A549 (cell line): ENCODE measurements at regions of chr17 and their contacts with region 1.

Region 1: DNA sequence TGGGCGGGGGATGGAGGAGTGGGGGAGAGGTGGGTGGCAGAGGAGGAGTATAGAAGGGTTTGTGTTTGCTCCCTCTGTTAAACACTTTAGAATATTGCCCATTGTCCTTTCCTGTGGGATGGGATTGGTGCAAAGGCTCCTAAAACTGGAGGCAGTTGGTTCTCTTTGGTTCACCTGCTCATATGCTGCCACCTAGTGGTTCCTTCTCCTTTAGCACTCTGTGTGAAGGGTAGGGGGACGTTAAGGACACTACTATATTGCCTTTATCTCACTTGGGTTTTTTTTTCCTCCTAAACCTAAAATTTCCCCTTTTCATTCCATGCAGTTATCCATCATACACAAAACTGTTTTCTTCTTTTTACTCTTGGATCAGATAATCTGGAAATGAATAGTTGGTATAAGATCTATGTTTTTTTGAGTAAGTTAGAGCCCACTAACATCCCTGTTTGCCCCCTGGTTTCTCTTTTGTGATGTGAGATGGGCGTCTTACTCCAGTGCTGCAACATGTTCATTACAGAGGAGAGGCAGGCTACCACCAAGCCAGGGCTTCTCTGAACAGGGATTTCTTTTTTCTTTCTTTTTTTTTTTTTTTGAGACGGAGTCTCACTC is 23.8 kb downstream of the SNX11 start:
- DNase-seq: peak; percentile 79 to 87
- ATAC-seq: peak; percentile 88 to 93
- H3K4me3 ChIP-seq: no peak overlapping the region
- H3K27ac ChIP-seq: no peak overlapping the region
- H3K4me1 ChIP-seq: peaks cover 12% of the 10 kb centered on the region
- CTCF ChIP-seq: peak; percentile 98
- EP300 ChIP-seq: no peak
- POLR2A ChIP-seq: no peak
- RAD21 ChIP-seq: peak; percentile 91 to 97

Region 2: DNA sequence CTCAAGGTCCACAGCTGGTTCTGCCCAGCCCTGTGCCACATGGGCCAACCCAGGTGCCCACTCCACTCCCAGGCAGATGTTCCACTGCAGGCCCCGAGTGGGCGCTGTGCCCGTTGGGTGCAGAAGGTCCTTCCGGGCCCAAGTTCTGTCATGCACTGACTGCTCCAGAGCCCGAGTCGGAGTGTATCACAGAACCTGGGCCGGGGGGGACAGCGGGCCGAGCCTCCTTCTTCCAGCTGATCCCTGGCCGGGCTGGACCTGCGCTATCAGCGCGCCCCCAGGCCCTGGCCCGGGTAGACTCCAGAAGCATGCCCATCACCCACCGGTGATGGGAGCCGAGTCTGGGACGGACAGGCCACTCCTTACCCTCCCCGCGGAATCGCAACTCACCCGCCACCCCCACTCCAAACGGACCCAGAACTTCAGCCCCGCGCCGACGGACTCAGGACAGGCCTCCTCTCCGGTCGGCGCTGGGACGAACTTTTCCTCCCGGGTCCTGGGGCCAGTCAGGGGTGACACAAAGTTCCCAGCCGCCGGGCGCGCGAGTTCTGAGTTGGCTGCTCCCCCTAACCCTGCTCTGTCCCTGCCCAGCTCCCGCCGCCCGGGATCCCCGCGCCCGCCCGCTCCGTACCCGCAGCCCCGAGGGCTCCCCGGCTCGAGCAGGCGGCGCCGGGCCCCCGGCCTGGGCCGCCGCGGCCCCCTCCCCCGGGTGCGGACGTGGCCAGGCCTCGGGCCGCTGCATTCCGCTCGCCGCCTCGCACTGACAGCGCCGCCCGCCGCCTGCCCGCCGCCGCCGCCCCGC is 94.1 kb before region 1 on chr17 and contains the start of gene COPZ2:
- CTCF ChIA-PET with region 1: interaction called, 11 read pairs
- POLR2A ChIA-PET with region 1: no interaction called
- DNase-seq: peak; percentile 71 to 85
- ATAC-seq: peak; percentile 94 to 95
- H3K4me3 ChIP-seq: peak within 1 kb of the TSS; percentile 63
- H3K27ac ChIP-seq: peak within 1 kb of the TSS; percentile 74 to 91
- H3K4me1 ChIP-seq: 0 out of 3 replicates have a peak, but pooled peaks cover 3% of the 10 kb centered on the region
- CTCF ChIP-seq: peak; percentile 70
- EP300 ChIP-seq: no peak
- POLR2A ChIP-seq: peak; percentile 28
- RAD21 ChIP-seq: 0 out of 5 replicates have a peak, but pooled peaks have one; percentile 17 to 36
- polyA plus RNA-seq, gene COPZ2: 19.1 and 19.3 TPM in 2 replicates

Region 3: GRCh38 chr17:48074315-48075081 is 56.8 kb before region 1 on chr17:
- CTCF ChIA-PET with region 1: interaction called, 157 read pairs
- POLR2A ChIA-PET with region 1: no interaction called
- DNase-seq: peak; percentile 72 to 80
- ATAC-seq: peak; percentile 91 to 92
- H3K4me3 ChIP-seq: no peak overlapping the region
- H3K27ac ChIP-seq: no peak overlapping the region
- H3K4me1 ChIP-seq: no peaks in the 10 kb centered on the region
- CTCF ChIP-seq: peak; percentile 96
- EP300 ChIP-seq: no peak
- POLR2A ChIP-seq: no peak
- RAD21 ChIP-seq: peak; percentile 83 to 88

Region 4: DNA sequence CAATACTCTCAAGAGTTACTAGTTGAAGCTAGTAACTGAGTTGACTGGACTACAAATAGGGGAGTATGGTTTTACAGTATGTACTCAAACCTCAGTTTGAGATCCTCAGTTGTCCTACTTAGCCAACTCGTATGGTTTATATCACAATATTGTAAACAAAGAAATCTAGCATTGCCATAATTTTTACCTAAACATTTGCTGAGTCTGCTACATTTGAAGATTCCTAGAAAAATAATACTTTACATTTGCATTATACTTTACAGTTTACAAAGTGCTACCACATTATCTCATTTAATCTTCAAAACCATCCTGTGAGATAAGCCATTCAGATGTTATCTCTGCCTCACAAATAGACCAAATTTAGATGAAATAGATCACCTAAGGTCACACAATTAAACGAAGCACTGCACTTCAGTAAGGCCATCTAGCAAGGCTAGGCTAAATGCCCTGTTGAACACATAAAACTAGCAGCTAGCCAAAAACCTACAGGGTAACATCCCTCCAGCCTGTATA is 46.3 kb before region 1 on chr17:
- CTCF ChIA-PET with region 1: interaction called, 157 read pairs
- POLR2A ChIA-PET with region 1: no interaction called
- DNase-seq: no peak
- ATAC-seq: no peak
- H3K4me3 ChIP-seq: no peak overlapping the region
- H3K27ac ChIP-seq: no peak overlapping the region
- H3K4me1 ChIP-seq: peaks cover 17% of the 10 kb centered on the region
- CTCF ChIP-seq: no peak
- EP300 ChIP-seq: no peak
- POLR2A ChIP-seq: no peak
- RAD21 ChIP-seq: no peak

Region 5: GRCh38 chr17:48095611-48096010 is 35.7 kb before region 1 on chr17:
- CTCF ChIA-PET with region 1: interaction called, 12 read pairs
- POLR2A ChIA-PET with region 1: no interaction called
- DNase-seq: no peak
- ATAC-seq: no peak
- H3K4me3 ChIP-seq: no peak overlapping the region
- H3K27ac ChIP-seq: no peak overlapping the region
- H3K4me1 ChIP-seq: peaks cover 23% of the 10 kb centered on the region
- CTCF ChIP-seq: no peak
- EP300 ChIP-seq: no peak
- POLR2A ChIP-seq: no peak
- RAD21 ChIP-seq: no peak

Region 6: GRCh38 chr17:48113201-48113676 is 18.1 kb before region 1 on chr17:
- CTCF ChIA-PET with region 1: interaction called, 18 read pairs
- POLR2A ChIA-PET with region 1: no interaction called
- DNase-seq: no peak
- ATAC-seq: no peak
- H3K4me3 ChIP-seq: no peak overlapping the region
- H3K27ac ChIP-seq: no peak overlapping the region
- H3K4me1 ChIP-seq: peaks cover 9% of the 10 kb centered on the region
- CTCF ChIP-seq: no peak
- EP300 ChIP-seq: no peak
- POLR2A ChIP-seq: no peak
- RAD21 ChIP-seq: no peak

Region 7: GRCh38 chr17:48153691-48154358 is 22.5 kb after region 1 on chr17:
- CTCF ChIA-PET with region 1: interaction called, 52 read pairs
- POLR2A ChIA-PET with region 1: no interaction called
- DNase-seq: peak; percentile 74 to 75
- ATAC-seq: peak; percentile 72 to 87
- H3K4me3 ChIP-seq: no peak overlapping the region
- H3K27ac ChIP-seq: no peak overlapping the region
- H3K4me1 ChIP-seq: peaks cover 5% of the 10 kb centered on the region
- CTCF ChIP-seq: peak; percentile 84
- EP300 ChIP-seq: no peak
- POLR2A ChIP-seq: no peak
- RAD21 ChIP-seq: peak; percentile 78 to 84